ENCODE measurements at regions of chr12 and their contacts with region 1.

Region 1: GRCh38 chr12:57576613-57577160 is 14.3 kb upstream of the PIP4K2C start:
- DNase-seq: peak; percentile 88
- ATAC-seq: peak; percentile 55
- H3K4me3 ChIP-seq: peak overlapping the region; percentile 33 to 66 (median 36); a peak in 5 of 6 replicates
- H3K27ac ChIP-seq: peak overlapping the region; percentile 99
- H3K4me1 ChIP-seq: peaks cover 78% of the 10 kb centered on the region
- H3K27me3 ChIP-seq: no peaks in the 10 kb centered on the region
- CTCF ChIP-seq: no peak
- EP300 ChIP-seq: no peak
- POLR2A ChIP-seq: no peak
- RAD21 ChIP-seq: no peak

Region 2: DNA sequence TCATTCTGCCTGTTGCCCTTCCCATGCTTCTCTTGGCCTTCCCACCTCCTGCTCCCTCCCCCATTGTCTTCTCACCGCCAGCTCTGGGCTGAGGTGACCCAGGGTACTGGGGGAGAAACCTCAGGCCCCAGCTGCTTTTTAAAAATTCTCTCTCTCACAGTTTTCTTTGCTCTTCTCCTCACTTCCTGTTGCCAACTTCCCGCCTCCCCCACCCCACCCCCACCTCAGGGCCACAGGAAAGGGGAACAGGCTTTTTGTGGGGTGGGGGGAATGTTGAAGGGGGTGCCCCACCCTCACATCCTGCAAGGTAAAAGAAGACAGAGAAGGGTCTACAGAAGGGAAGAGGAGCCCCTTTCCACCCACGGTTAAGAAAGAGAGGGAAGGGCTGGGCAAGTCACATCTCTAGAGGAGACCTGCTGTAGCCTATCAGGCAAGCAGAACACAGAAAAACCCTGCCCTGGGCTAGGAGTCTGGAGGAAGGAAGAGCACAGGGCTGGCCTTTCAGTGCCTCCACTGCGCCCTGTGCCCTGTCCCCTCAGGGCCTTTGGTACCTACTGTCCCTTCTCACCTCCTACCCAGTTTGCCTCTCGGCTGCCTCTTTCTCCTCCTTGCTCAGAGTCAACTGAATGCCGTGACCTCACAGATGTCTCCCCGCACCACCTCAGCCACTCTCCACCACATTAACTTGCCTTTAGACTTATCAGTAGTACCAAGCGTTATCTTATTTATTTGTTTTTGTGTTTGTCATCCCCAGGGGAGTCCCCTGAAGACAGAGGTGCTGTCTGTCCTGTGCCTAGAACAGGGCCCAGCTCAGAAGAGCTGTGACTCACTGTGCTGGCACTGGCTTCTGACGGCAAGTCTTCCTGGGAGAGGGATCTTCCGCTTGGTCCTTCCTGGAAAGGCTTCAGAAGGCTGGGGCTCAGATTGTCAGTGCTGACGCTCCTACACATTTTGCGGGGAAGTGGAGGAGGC is 98.7 kb before region 1 on chr12:
- CTCF ChIA-PET with region 1: no interaction called
- POLR2A ChIA-PET with region 1: no interaction called
- in situ Hi-C with region 1: no loop called
- intact Hi-C with region 1: no loop called
- DNase-seq: no peak
- ATAC-seq: peak; percentile 43
- H3K4me3 ChIP-seq: peak overlapping the region in 2 of 3 experiments; percentile 24 to 51; a peak in 3 of 6 replicates
- H3K27ac ChIP-seq: no peak overlapping the region
- H3K4me1 ChIP-seq: peaks cover 35% of the 10 kb centered on the region
- H3K27me3 ChIP-seq: peaks cover 8 to 69% of the 10 kb centered on the region in 2 experiments
- CTCF ChIP-seq: no peak
- EP300 ChIP-seq: no peak
- POLR2A ChIP-seq: no peak
- RAD21 ChIP-seq: no peak

Region 3: DNA sequence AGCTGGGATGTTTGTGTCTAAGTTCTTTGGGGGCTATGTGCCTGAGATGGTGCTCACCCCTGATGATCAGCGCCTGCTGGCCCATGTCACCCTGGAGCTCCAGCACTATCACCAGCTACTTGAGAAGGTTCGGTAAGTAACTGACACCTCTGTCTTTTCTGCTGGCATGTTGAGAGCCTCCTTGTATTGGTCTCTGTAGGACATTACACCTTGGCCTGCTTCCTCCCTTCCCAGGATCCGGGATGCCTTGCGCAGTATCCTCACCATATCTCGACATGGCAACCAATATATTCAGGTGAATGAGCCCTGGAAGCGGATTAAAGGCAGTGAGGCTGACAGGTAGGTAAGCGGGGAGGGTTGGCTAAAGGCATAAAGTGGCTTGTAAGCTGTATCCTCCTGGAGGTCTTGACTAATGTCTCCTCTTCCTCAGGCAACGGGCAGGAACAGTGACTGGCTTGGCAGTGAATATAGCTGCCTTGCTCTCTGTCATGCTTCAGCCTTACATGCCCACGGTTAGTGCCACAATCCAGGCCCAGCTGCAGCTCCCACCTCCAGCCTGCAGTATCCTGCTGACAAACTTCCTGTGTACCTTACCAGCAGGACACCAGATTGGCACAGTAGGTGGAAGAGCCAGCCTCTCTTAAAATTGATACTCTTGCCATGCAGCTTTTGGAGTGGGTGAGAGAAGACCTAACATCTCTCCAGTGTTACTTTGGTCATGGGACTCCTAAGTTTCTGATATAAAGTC is 61.8 kb before region 1 on chr12:
- CTCF ChIA-PET with region 1: no interaction called
- POLR2A ChIA-PET with region 1: interaction called, 40 read pairs
- in situ Hi-C with region 1: no loop called
- intact Hi-C with region 1: no loop called
- DNase-seq: no peak
- ATAC-seq: no peak; the same call in 2 of the 3 replicates
- H3K4me3 ChIP-seq: no peak overlapping the region
- H3K27ac ChIP-seq: no peak overlapping the region
- H3K4me1 ChIP-seq: peaks cover 18% of the 10 kb centered on the region
- H3K27me3 ChIP-seq: no peaks in the 10 kb centered on the region; a peak in 1 of 5 replicates
- CTCF ChIP-seq: no peak
- EP300 ChIP-seq: no peak
- POLR2A ChIP-seq: peak in 1 of 2 experiments; percentile 55; a peak in 2 of 4 replicates
- RAD21 ChIP-seq: no peak

Region 4: GRCh38 chr12:57546438-57547383 is 30.0 kb before region 1 on chr12 and contains the start of gene DCTN2:
- CTCF ChIA-PET with region 1: no interaction called
- POLR2A ChIA-PET with region 1: interaction called, 35 read pairs
- in situ Hi-C with region 1: no loop called
- intact Hi-C with region 1: loop called (anchors 1 kb)
- DNase-seq: peak; percentile 94
- ATAC-seq: peak; percentile 96
- H3K4me3 ChIP-seq: peak within 1 kb of the TSS; percentile 87 to 96 (median 91)
- H3K27ac ChIP-seq: peak within 1 kb of the TSS; percentile 56
- H3K4me1 ChIP-seq: peaks cover 57% of the 10 kb centered on the region
- H3K27me3 ChIP-seq: peaks cover 0 to 27% of the 10 kb centered on the region in 2 experiments; a peak in 2 of 5 replicates
- CTCF ChIP-seq: no peak; the same call in 1 of the 2 replicates
- EP300 ChIP-seq: no peak; a peak in 1 of 4 replicates
- POLR2A ChIP-seq: peak in 1 of 2 experiments; percentile 30; a peak in 1 of 4 replicates
- RAD21 ChIP-seq: peak; percentile 7; the same call in 1 of the 2 replicates
- total RNA-seq, gene DCTN2: 72.0 and 75.5 TPM in 2 replicates

Region 5: GRCh38 chr12:57590536-57591479 is 14.1 kb after region 1 on chr12 and contains the start of gene PIP4K2C:
- CTCF ChIA-PET with region 1: no interaction called
- POLR2A ChIA-PET with region 1: interaction called, 26 read pairs
- in situ Hi-C with region 1: no loop called
- intact Hi-C with region 1: no loop called
- DNase-seq: peak; percentile 77
- ATAC-seq: peak; percentile 93
- H3K4me3 ChIP-seq: peak within 1 kb of the TSS; percentile 70 to 99 (median 92)
- H3K27ac ChIP-seq: peak within 1 kb of the TSS; percentile 63
- H3K4me1 ChIP-seq: peaks cover 22% of the 10 kb centered on the region
- H3K27me3 ChIP-seq: no peaks in the 10 kb centered on the region; a peak in 1 of 5 replicates
- CTCF ChIP-seq: peak; percentile 1; the same call in 1 of the 2 replicates
- EP300 ChIP-seq: 0 out of 4 replicates have a peak, but pooled peaks have one; percentile 11 to 18
- POLR2A ChIP-seq: peak; percentile 58 to 73; a peak in 3 of 4 replicates
- RAD21 ChIP-seq: no peak
- total RNA-seq, gene PIP4K2C: 23.6 and 26.4 TPM in 2 replicates

Region 6: GRCh38 chr12:57611108-57611809 is 34.6 kb after region 1 on chr12 and contains the start of gene ARHGEF25:
- CTCF ChIA-PET with region 1: no interaction called
- POLR2A ChIA-PET with region 1: interaction called, 16 read pairs
- in situ Hi-C with region 1: no loop called
- intact Hi-C with region 1: no loop called
- DNase-seq: peak; percentile 41
- ATAC-seq: peak; percentile 80
- H3K4me3 ChIP-seq: peak within 1 kb of the TSS; percentile 71 to 78 (median 76)
- H3K27ac ChIP-seq: peak within 1 kb of the TSS; percentile 22
- H3K4me1 ChIP-seq: peaks cover 34% of the 10 kb centered on the region
- H3K27me3 ChIP-seq: peaks cover 0 to 19% of the 10 kb centered on the region in 2 experiments; a peak in 2 of 5 replicates
- CTCF ChIP-seq: peak; percentile 22; the same call in 1 of the 2 replicates
- EP300 ChIP-seq: no peak
- POLR2A ChIP-seq: peak; percentile 49 to 80; a peak in 3 of 4 replicates
- RAD21 ChIP-seq: no peak
- total RNA-seq, gene ARHGEF25: 10.1 and 11.5 TPM in 2 replicates

Region 7: GRCh38 chr12:57693659-57694458 is 117.2 kb after region 1 on chr12 and contains the start of gene OS9:
- CTCF ChIA-PET with region 1: no interaction called
- POLR2A ChIA-PET with region 1: interaction called, 3 read pairs
- in situ Hi-C with region 1: no loop called
- intact Hi-C with region 1: loop called (anchors 1 kb)
- DNase-seq: peak; percentile 100
- ATAC-seq: peak; percentile 99
- H3K4me3 ChIP-seq: peak within 1 kb of the TSS; percentile 86 to 90 (median 86)
- H3K27ac ChIP-seq: peak within 1 kb of the TSS; percentile 69
- H3K4me1 ChIP-seq: peaks cover 48% of the 10 kb centered on the region
- H3K27me3 ChIP-seq: no peaks in the 10 kb centered on the region
- CTCF ChIP-seq: peak; percentile 76
- EP300 ChIP-seq: 0 out of 4 replicates have a peak, but pooled peaks of 1 of the 2 experiments have one; percentile 10
- POLR2A ChIP-seq: peak; percentile 94 to 96
- RAD21 ChIP-seq: peak; percentile 28; the same call in 1 of the 2 replicates
- total RNA-seq, gene OS9: 51.7 and 156 TPM in 2 replicates

Region 8: GRCh38 chr12:57941165-57941894 is 364.6 kb after region 1 on chr12 and contains the start of gene ATP23:
- CTCF ChIA-PET with region 1: no interaction called
- POLR2A ChIA-PET with region 1: no interaction called
- in situ Hi-C with region 1: no loop called
- intact Hi-C with region 1: no loop called
- DNase-seq: peak; percentile 84
- ATAC-seq: peak; percentile 98
- H3K4me3 ChIP-seq: peak within 1 kb of the TSS; percentile 66 to 96 (median 81)
- H3K27ac ChIP-seq: peak within 1 kb of the TSS; percentile 88
- H3K4me1 ChIP-seq: peaks cover 40% of the 10 kb centered on the region
- H3K27me3 ChIP-seq: no peaks in the 10 kb centered on the region
- CTCF ChIP-seq: peak; percentile 22
- EP300 ChIP-seq: no peak
- POLR2A ChIP-seq: peak; percentile 90 to 93
- RAD21 ChIP-seq: no peak
- total RNA-seq, gene ATP23: 12.1 and 13.1 TPM in 2 replicates

Measured in HepG2 (cell line).